Caco-2 (cell line): ENCODE measurements at regions of chr1 and their contacts with region 1.

Region 1: DNA sequence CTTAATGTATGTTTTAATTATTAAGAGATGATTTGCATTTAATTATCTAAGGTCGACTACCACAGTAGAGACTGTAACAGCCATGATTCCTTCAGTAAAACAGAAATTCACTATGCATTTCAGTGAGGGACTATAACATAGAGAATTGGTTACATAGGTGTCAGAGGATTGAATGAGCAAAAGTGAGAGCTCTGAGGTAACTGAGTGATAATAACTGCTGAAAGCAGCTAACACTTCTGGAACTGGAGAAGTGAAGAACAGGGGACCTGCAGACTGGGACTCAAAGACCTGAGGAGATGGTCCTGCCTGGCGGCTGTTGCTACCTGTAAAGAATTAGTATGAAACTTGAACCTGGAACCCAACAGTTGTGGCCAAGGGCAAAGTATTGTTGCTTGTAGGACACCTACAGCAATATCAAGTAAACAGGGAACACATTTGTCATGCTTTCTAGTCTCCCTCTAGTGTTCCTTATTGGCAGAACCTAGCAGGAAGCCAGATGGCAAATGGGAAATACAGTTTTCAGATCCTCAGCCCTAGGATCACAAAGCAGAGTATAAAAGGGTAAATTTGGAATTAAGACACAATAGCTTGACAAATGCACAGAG is 110.6 kb downstream of the HS2ST1 start:
- DNase-seq: peak in 1 of 2 experiments; percentile 36
- H3K4me3 ChIP-seq: no peak overlapping the region
- H3K4me3 Mint-ChIP-seq: no peak overlapping the region
- H3K27ac Mint-ChIP-seq: no peak overlapping the region
- H3K4me1 ChIP-seq: no peaks in the 10 kb centered on the region
- H3K4me1 Mint-ChIP-seq: peaks cover 14% of the 10 kb centered on the region
- H3K27me3 ChIP-seq: no peaks in the 10 kb centered on the region
- H3K27me3 Mint-ChIP-seq: no peaks in the 10 kb centered on the region
- CTCF ChIP-seq: peak; percentile 22 to 48

Region 2: GRCh38 chr1:86913896-86914634 is 111.0 kb before region 1 on chr1 and contains the start of gene SELENOF:
- CTCF ChIA-PET with region 1: no interaction called
- POLR2A ChIA-PET with region 1: no interaction called
- intact Hi-C with region 1: loop called (anchors 1 kb)
- DNase-seq: peak; percentile 96 to 98
- H3K4me3 ChIP-seq: peak within 1 kb of the TSS; percentile 92
- H3K4me3 Mint-ChIP-seq: no peak within 1 kb of the TSS
- H3K27ac Mint-ChIP-seq: no peak within 1 kb of the TSS
- H3K4me1 ChIP-seq: no peaks in the 10 kb centered on the region; the same call in none of the 2 replicates
- H3K4me1 Mint-ChIP-seq: peaks cover 11% of the 10 kb centered on the region
- H3K27me3 ChIP-seq: no peaks in the 10 kb centered on the region
- H3K27me3 Mint-ChIP-seq: no peaks in the 10 kb centered on the region
- CTCF ChIP-seq: no peak
- total RNA-seq, gene SELENOF: 161 and 166 TPM in 2 replicates